Activated CD4-positive, alpha-beta memory T cell treated with anti-CD3 and anti-CD28 coated beads for 36 hours (primary cell): ENCODE measurements at regions of chr5 and their contacts with region 1.

Region 1: GRCh38 chr5:61162010-61162831 is at the start of gene SMIM15:
- DNase-seq: peak; percentile 91
- H3K4me3 Mint-ChIP-seq: peak within 1 kb of the TSS; percentile 96
- H3K27ac Mint-ChIP-seq: peak within 1 kb of the TSS; percentile 96
- H3K4me1 Mint-ChIP-seq: peaks cover 35% of the 10 kb centered on the region
- H3K27me3 Mint-ChIP-seq: no peaks in the 10 kb centered on the region
- total RNA-seq, gene SMIM15: 56.9 to 67.2 TPM

Region 2: GRCh38 chr5:60699530-60700382 is 462.5 kb before region 1 on chr5 and contains the start of gene DEPDC1B:
- CTCF ChIA-PET with region 1: no interaction called
- POLR2A ChIA-PET with region 1: no interaction called
- intact Hi-C with region 1: loop called (anchors 1 kb)
- DNase-seq: peak; percentile 93
- H3K4me3 Mint-ChIP-seq: peak within 1 kb of the TSS; percentile 87
- H3K27ac Mint-ChIP-seq: peak within 1 kb of the TSS; percentile 72
- H3K4me1 Mint-ChIP-seq: peaks cover 18% of the 10 kb centered on the region
- H3K27me3 Mint-ChIP-seq: no peaks in the 10 kb centered on the region
- total RNA-seq, gene DEPDC1B: 33.2 to 33.6 TPM

Region 3: GRCh38 chr5:60888359-60889061 is 273.7 kb before region 1 on chr5:
- CTCF ChIA-PET with region 1: no interaction called
- POLR2A ChIA-PET with region 1: no interaction called
- intact Hi-C with region 1: no loop called
- DNase-seq: no peak
- H3K4me3 Mint-ChIP-seq: no peak overlapping the region
- H3K27ac Mint-ChIP-seq: no peak overlapping the region
- H3K4me1 Mint-ChIP-seq: no peaks in the 10 kb centered on the region
- H3K27me3 Mint-ChIP-seq: no peaks in the 10 kb centered on the region

Region 4: DNA sequence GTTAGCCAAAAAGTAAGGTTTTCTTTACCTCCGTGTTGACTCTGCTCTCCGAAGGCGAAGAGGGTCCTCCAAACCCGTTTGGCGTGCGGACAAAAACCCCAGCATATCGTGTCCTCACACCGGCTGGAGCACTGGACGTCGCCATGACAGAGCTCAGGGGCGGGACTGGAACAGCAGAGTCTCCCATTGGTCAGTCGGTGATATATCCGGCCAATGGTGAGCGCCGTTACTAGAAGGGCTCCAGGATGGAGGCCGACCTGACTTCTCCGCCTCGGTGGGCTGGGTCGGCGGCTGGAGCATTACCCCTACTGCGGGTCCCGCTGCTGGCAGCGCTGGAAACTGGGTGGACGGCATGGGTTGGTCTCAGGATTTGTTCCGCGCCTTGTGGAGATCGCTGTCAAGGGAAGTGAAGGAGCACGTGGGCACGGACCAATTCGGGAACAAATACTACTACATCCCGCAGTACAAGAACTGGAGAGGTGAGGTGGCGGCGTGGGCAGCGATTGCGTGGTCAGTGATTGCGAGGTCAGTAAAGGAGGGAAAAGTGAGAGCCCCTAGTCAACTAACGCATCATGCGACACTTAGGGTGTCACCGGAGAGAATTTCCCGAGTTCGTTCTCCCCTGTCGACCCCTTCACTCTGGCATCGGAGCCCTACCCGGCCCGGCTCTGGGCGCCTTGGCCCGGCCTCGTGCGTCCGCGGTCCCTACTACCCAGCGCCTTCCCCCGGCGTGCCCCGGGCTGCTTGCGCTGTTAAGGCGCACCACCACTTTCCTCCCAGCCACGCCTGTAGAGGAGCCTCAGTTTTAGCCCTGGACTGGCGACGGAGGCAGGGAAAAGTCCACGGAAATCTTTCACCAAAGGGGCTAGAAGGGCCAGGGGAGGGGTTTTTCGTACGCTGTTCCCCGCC is 217.1 kb before region 1 on chr5 and contains the starts of genes ERCC8 and NDUFAF2:
- CTCF ChIA-PET with region 1: no interaction called
- POLR2A ChIA-PET with region 1: no interaction called
- intact Hi-C with region 1: loop called (anchors 1 kb)
- DNase-seq: peak; percentile 93
- H3K4me3 Mint-ChIP-seq: no peak within 1 kb of the TSS
- H3K27ac Mint-ChIP-seq: peak within 1 kb of the TSS; percentile 77
- H3K4me1 Mint-ChIP-seq: peaks cover 23% of the 10 kb centered on the region
- H3K27me3 Mint-ChIP-seq: no peaks in the 10 kb centered on the region
- total RNA-seq, gene ERCC8: 7.7 to 9.1 TPM
- total RNA-seq, gene NDUFAF2: 35.6 to 38.4 TPM

Region 5: GRCh38 chr5:60972231-60972630 is 190.0 kb before region 1 on chr5:
- CTCF ChIA-PET with region 1: no interaction called
- POLR2A ChIA-PET with region 1: no interaction called
- intact Hi-C with region 1: loop called (anchors 5 kb)
- DNase-seq: peak; percentile 73
- H3K4me3 Mint-ChIP-seq: no peak overlapping the region
- H3K27ac Mint-ChIP-seq: no peak overlapping the region
- H3K4me1 Mint-ChIP-seq: peaks cover 14% of the 10 kb centered on the region
- H3K27me3 Mint-ChIP-seq: no peaks in the 10 kb centered on the region

Region 6: DNA sequence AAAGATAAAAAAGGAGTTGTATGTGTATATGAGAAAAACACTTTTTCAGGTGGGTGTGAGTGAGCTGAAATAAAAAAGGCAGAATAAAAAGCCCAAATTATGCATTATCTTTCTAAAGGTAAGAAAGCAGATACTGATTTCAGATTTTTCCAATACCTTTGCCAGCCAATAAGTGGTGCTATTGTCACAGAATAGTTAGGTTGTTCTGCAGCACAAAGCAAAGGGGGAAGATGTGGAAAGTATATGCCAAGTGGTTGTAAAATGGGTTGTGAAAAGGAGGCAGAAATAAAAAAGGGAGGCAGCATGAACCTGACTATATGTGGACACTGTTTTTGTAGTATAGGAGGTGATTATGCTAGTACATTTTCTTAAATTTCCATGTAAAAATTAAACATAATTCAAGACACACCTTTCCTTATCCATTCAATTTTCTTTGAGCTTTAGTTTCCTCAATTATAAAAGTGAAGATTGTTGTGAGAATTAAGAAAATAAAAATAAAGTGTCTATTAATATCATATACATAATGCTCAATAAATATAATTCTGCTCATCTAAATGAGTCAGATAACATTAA is 106.7 kb before region 1 on chr5:
- CTCF ChIA-PET with region 1: no interaction called
- POLR2A ChIA-PET with region 1: no interaction called
- intact Hi-C with region 1: loop called (anchors 5 kb)
- DNase-seq: no peak
- H3K4me3 Mint-ChIP-seq: no peak overlapping the region
- H3K27ac Mint-ChIP-seq: no peak overlapping the region
- H3K4me1 Mint-ChIP-seq: peaks cover 4% of the 10 kb centered on the region
- H3K27me3 Mint-ChIP-seq: no peaks in the 10 kb centered on the region

Region 7: GRCh38 chr5:61139931-61140330 is 22.3 kb before region 1 on chr5:
- CTCF ChIA-PET with region 1: no interaction called
- POLR2A ChIA-PET with region 1: no interaction called
- intact Hi-C with region 1: no loop called
- DNase-seq: no peak
- H3K4me3 Mint-ChIP-seq: no peak overlapping the region
- H3K27ac Mint-ChIP-seq: no peak overlapping the region
- H3K4me1 Mint-ChIP-seq: no peaks in the 10 kb centered on the region
- H3K27me3 Mint-ChIP-seq: no peaks in the 10 kb centered on the region

Region 8: DNA sequence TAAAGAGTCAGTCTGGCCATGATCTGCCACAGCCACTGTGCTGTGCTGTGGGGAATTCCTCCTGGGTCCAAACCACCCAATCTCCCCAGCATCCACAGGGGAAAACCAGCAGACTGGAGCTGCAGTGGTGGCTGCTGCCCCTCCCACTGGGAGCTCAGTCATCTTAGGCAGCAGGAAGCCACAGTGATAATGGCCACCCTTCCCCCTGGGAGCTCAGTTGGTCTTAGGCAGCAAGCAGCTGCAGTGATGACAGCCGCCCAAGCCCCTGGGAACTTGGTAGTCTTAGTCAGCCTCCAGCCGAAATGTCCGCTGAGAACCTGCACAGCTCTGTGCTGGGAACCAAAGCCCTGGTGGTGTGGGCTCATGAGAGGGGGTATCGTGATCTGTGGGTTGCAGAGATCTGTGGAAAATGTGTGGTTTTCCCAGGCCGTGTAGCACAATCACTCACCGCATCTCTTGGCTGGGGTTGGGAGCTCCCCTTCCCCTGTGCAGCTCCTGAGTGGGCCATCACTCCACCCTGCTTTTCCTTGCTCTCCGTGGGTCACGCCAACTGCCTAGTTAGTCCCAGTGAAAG is 38.4 kb after region 1 on chr5:
- CTCF ChIA-PET with region 1: no interaction called
- POLR2A ChIA-PET with region 1: interaction called, 3 read pairs
- intact Hi-C with region 1: loop called (anchors 1 kb)
- DNase-seq: peak; percentile 10
- H3K4me3 Mint-ChIP-seq: no peak overlapping the region
- H3K27ac Mint-ChIP-seq: no peak overlapping the region
- H3K4me1 Mint-ChIP-seq: peaks cover 16% of the 10 kb centered on the region
- H3K27me3 Mint-ChIP-seq: peaks cover 41% of the 10 kb centered on the region

Region 9: DNA sequence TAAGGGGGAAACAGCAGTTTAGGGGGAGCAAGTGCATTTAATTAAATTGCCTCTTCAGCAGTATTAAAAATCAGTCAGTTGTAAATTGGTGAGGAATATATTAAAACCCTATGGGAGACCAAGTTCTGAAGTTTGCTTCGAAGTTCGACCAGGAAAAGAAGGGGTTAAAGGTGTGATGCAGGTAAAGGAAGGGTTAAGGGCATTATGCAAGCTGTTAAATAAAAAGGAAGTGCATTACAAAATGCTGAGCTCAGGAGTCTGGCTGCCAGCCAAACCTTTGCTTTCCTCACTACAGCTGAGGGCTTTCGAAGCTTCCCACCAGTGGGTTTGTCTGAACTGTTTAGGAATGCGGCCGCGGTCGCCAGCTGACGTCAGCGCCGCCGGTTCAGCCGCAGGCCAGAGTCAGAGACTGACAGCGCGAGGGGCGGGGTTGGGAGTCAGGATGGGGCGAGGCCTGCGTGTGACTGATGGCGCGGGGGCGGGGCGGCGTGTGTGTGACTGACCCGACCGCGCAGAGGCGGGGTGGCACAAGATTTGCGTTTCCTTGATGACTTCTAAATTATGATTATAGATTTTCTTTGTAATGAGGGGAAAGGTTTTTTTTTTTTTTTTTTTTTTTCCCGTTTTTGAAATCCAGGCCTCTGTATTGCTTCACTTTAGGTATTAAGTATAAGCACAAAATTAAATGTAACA is 246.4 kb after region 1 on chr5:
- CTCF ChIA-PET with region 1: no interaction called
- POLR2A ChIA-PET with region 1: no interaction called
- intact Hi-C with region 1: loop called (anchors 5 kb)
- DNase-seq: peak; percentile 98
- H3K4me3 Mint-ChIP-seq: peak overlapping the region; percentile 55
- H3K27ac Mint-ChIP-seq: peak overlapping the region; percentile 50
- H3K4me1 Mint-ChIP-seq: peaks cover 29% of the 10 kb centered on the region
- H3K27me3 Mint-ChIP-seq: no peaks in the 10 kb centered on the region